Pancreas (tissue), 10 donors: ENCODE measurements at regions of chr15 and their contacts with region 1.

Region 1: DNA sequence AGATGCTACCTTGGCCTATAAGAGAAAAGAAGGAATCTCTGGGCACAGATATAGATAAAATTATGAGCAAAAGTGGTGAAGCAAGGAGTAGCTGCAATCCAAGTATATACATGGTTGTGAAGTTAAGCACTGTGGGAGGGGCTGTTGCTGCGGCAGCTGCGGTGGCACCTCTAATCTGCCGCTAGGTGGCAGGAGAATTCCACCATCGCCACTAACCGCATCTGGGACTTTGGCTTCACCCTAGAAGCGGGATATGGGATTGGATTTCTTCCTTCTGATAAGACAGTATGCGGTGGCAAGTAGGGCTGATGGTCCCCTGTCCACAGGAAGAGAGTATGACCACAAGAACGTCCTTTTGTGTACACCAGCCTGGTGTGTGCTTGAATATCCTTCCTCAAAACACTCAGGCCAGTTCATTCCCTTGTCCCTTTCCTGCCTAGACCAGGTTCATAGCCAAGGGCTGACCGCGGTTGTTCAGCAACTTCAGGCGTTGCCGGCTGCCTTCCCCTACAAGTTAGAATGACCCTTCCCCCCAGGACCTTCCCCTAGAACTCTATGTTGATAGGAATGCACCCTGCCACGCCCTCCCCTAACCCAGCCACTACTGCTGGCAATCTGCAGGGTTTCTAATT is 5.1 kb downstream of the MAGEL2 start:
- DNase-seq: peak; percentile 37 to 75 (median 60)
- ATAC-seq: peak; percentile 76 to 93 (median 90)
- H3K4me3 ChIP-seq: no peak overlapping the region
- H3K27ac ChIP-seq: no peak overlapping the region
- H3K4me1 ChIP-seq: no peaks in the 10 kb centered on the region
- H3K27me3 ChIP-seq: no peaks in the 10 kb centered on the region
- CTCF ChIP-seq: peak; percentile 75 to 87 (median 86)

Region 2: DNA sequence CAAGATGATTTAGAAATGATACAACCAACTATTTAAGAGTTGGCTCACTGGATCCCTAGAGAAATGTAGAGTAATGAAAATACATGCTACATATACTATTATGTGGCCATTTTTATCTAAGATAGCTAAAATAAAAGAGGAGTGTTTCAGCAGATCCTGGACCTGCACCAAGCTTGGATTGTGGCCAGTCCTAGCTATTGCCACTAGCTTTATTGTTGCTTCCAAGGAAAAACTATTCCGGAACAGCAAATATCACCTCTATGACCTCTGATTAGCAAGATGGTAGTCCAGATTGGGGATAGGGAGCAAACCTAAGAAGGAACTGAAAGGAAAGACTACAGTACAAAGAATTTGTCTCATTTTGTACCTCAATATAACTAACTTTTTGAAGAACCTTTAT is 108.2 kb after region 1 on chr15:
- intact Hi-C with region 1: no loop called
- DNase-seq: no peak
- ATAC-seq: peak in 2 of 4 donors; percentile 14 to 29
- H3K4me3 ChIP-seq: no peak overlapping the region
- H3K27ac ChIP-seq: no peak overlapping the region
- H3K4me1 ChIP-seq: peaks cover 0 to 4% (median 0%) of the 10 kb centered on the region in 3 donors
- H3K27me3 ChIP-seq: no peaks in the 10 kb centered on the region
- CTCF ChIP-seq: no peak

Region 3: DNA sequence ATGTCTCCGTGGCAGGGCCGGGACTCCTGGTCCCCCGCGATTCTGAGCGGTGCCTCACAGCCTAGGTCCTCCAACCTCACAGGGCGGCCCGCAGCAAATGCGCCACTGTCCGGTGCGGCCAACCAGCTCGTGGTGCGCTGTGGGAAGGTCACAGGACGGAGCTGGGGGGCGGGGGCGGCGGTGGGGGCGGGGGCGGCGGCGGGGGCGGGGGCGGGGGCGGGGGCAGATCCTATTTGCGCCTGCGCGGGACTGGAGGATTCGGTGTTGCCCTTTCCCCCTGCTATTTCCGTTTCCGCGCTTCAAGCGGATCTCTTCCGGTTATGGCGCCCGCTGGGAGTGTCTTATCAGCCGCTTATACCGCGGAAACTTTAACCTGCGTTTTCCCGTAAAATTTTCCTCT is 1205.5 kb after region 1 on chr15:
- intact Hi-C with region 1: loop called in 1 of 3 experiments (anchors 10 kb)
- DNase-seq: peak; percentile 20 to 55 (median 36)
- ATAC-seq: peak; percentile 69 to 83 (median 76)
- H3K4me3 ChIP-seq: peak overlapping the region in 3 of 4 donors; percentile 13 to 32 (median 16)
- H3K27ac ChIP-seq: no peak overlapping the region
- H3K4me1 ChIP-seq: no peaks in the 10 kb centered on the region
- H3K27me3 ChIP-seq: no peaks in the 10 kb centered on the region
- CTCF ChIP-seq: no peak